OCI-LY7 (cell line): ENCODE measurements at regions of chr22 and their contacts with region 1.

Region 1: GRCh38 chr22:22855617-22856308 is 31.9 kb upstream of the IGLL5 start:
- DNase-seq: peak; percentile 82
- H3K4me3 ChIP-seq: no peak overlapping the region
- H3K27ac ChIP-seq: peak overlapping the region; percentile 14
- H3K4me1 ChIP-seq: peaks cover 70% of the 10 kb centered on the region
- CTCF ChIP-seq: peak; percentile 91

Region 2: GRCh38 chr22:22870577-22871404 is 15.0 kb after region 1 on chr22:
- CTCF ChIA-PET with region 1: interaction called, 12 read pairs
- POLR2A ChIA-PET with region 1: interaction called, 6 read pairs
- intact Hi-C with region 1: no loop called
- DNase-seq: peak; percentile 82
- H3K4me3 ChIP-seq: no peak overlapping the region
- H3K27ac ChIP-seq: no peak overlapping the region
- H3K4me1 ChIP-seq: peaks cover 64% of the 10 kb centered on the region
- CTCF ChIP-seq: peak; percentile 83

Region 3: DNA sequence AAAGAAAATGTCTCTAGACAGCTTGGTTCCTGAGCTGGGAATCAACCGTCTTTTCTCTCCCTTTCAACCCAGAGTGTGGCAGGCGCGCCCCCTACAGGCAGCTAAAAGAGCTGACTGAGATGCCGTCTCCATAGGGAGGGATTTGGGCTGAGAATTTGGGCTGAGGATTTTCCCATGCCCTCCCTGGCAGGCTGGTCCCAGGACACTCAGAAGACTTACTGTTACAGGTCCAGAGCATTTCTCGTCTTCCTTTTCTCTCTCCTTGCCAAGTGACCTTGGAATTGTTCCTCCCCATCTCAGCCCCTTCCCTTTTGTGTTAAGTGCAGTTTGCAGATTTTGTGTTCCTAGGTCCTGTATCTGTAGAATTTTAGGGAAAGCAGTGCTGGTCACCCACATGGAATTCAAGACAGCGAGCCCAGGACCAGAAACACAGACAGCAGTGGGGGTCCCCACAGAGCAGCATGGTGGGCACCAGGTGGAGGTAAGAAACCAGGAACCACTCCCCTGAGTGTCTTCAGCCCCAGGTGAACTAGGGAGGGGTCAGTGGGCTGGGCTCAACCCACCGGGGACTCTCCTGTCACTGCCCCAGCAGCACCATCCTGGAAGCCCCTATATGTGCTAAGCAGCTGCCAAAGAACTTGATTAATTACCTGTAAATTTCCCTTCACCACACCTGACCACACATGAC is 21.9 kb after region 1 on chr22:
- CTCF ChIA-PET with region 1: interaction called, 8 read pairs
- POLR2A ChIA-PET with region 1: interaction called, 4 read pairs
- intact Hi-C with region 1: loop called (anchors 1 kb)
- DNase-seq: peak; percentile 75
- H3K4me3 ChIP-seq: no peak overlapping the region
- H3K27ac ChIP-seq: no peak overlapping the region
- H3K4me1 ChIP-seq: peaks cover 53% of the 10 kb centered on the region
- CTCF ChIP-seq: peak; percentile 84

Region 4: DNA sequence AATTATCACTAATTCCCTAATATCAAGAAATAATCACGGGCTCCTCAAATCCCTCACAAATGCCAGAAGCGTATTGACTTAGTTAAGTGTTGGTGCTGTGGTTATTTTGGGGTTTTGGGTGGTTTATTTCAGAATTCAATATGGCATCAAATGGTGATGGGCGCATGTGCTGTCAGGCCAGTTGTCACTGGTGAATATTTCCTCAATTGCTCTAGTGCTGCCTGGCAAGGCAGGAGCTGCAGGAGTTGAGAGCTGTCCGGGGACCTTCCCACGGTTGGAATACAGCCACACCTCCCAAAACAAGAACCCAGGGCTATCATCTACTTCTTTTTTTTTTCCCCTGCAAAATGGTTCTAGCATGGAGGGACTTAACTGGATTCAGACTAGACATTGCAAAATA is 42.2 kb after region 1 on chr22:
- CTCF ChIA-PET with region 1: no interaction called
- POLR2A ChIA-PET with region 1: no interaction called
- intact Hi-C with region 1: no loop called
- DNase-seq: no peak
- H3K4me3 ChIP-seq: no peak overlapping the region
- H3K27ac ChIP-seq: peak overlapping the region; percentile 81
- H3K4me1 ChIP-seq: peaks cover 89% of the 10 kb centered on the region
- CTCF ChIP-seq: no peak

Region 5: GRCh38 chr22:22942511-22943329 is 87.0 kb after region 1 on chr22:
- CTCF ChIA-PET with region 1: interaction called, 10 read pairs
- POLR2A ChIA-PET with region 1: interaction called, 6 read pairs
- intact Hi-C with region 1: no loop called
- DNase-seq: peak; percentile 89
- H3K4me3 ChIP-seq: peak overlapping the region; percentile 14
- H3K27ac ChIP-seq: peak overlapping the region; percentile 90
- H3K4me1 ChIP-seq: peaks cover 93% of the 10 kb centered on the region
- CTCF ChIP-seq: peak; percentile 98

Region 6: DNA sequence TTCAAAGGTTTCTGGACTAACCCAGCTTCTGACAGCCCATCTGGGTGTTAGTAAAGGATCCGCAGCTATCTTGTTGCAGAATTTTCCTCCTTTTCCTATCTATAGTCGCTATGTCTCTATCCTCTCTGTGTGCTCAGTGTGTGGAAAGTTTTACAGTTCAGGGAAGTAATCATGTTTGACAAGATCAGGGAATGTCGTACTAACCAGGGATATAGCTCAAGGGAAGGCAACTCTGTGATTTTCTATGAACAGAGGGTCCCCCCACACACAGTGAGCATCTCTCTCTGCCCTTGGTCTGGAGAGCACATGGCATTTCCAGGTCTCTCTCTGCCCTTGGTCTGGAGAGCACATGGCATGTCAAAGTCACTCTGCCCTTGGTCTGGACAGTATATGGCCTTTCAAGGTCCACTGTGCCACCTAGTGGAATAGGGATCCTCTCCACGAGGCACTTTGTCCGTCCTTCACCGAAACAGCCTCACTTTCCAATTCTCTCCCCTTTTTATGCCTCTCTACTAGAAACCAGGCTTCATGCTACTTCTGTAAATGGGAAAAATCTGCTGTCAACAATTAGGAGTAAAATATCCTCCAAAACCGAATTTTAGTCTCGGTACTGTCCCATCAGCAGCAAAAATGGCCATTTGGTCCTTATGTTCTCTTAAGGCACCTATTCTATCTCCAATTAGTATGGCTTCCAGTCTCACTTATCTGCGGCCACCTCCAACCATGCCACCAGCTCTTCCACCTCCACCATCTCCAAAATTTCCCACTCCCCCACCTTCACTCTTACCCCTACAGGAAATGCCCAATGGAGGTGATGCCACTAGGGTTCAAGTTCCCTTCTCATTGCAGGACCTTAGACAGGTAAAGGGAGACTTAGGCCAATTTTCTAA is 120.5 kb after region 1 on chr22:
- CTCF ChIA-PET with region 1: no interaction called
- POLR2A ChIA-PET with region 1: no interaction called
- intact Hi-C with region 1: no loop called
- DNase-seq: no peak
- H3K4me3 ChIP-seq: no peak overlapping the region
- H3K27ac ChIP-seq: no peak overlapping the region
- H3K4me1 ChIP-seq: peaks cover 2% of the 10 kb centered on the region
- CTCF ChIP-seq: 0 out of 2 replicates have a peak, but pooled peaks have one; percentile 31